ENCODE measurements at regions of chr20 and their contacts with region 1.

Region 1: DNA sequence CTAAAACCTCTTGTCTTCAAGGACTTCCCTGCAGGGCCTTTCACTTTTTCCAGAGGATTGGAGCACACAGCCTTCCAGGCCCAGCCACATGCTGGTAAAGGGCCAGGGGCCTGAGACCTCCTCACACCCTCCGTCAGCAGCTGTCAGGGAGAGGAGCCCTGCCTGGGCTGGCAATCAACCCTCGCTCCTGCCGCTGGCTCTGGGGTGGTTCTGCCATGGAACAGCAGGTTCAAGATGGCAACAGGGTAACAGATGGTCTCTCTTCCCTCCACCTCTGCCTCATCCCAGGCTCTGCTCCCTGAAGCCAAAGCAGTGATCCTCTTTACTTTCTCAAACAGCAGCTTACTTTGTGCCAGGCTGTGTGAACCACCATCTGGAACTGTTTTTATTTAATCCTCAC is 23.8 kb downstream of the PCNA start:
- DNase-seq: no peak
- ATAC-seq: no peak
- H3K4me3 ChIP-seq: no peak overlapping the region
- H3K27ac ChIP-seq: no peak overlapping the region
- H3K4me1 ChIP-seq: no peaks in the 10 kb centered on the region
- H3K27me3 ChIP-seq: no peaks in the 10 kb centered on the region
- CTCF ChIP-seq: no peak

Region 2: GRCh38 chr20:4769328-4769727 is 326.6 kb before region 1 on chr20:
- intact Hi-C with region 1: loop called in 1 of 2 experiments (anchors 2 kb)
- DNase-seq: no peak
- ATAC-seq: no peak
- H3K4me3 ChIP-seq: no peak overlapping the region
- H3K27ac ChIP-seq: no peak overlapping the region
- H3K4me1 ChIP-seq: no peaks in the 10 kb centered on the region
- H3K27me3 ChIP-seq: no peaks in the 10 kb centered on the region
- CTCF ChIP-seq: no peak

Region 3: GRCh38 chr20:5135363-5136012 is 39.6 kb after region 1 on chr20:
- intact Hi-C with region 1: no loop called
- DNase-seq: no peak
- ATAC-seq: peak; percentile 63 to 73 (median 72)
- H3K4me3 ChIP-seq: peak overlapping the region; percentile 10
- H3K27ac ChIP-seq: peak overlapping the region; percentile 75
- H3K4me1 ChIP-seq: peaks cover 54% of the 10 kb centered on the region
- H3K27me3 ChIP-seq: no peaks in the 10 kb centered on the region
- CTCF ChIP-seq: no peak